Activated CD8-positive, alpha-beta memory T cell treated with anti-CD3 and anti-CD28 coated beads, Interleukin-2, amount 10 ng/mL, durations not matched to agents 7 days and 5 days (primary cell): ENCODE measurements at regions of chr1 and their contacts with region 1.

Region 1: GRCh38 chr1:155084722-155085503 is 6.3 kb downstream of the EFNA3 start:
- DNase-seq: peak; percentile 95
- ATAC-seq: peak; percentile 85
- H3K4me3 Mint-ChIP-seq: peak overlapping the region; percentile 92
- H3K27ac Mint-ChIP-seq: peak overlapping the region; percentile 94
- H3K4me1 Mint-ChIP-seq: peaks cover 32% of the 10 kb centered on the region
- H3K27me3 Mint-ChIP-seq: peaks cover 33% of the 10 kb centered on the region

Region 2: DNA sequence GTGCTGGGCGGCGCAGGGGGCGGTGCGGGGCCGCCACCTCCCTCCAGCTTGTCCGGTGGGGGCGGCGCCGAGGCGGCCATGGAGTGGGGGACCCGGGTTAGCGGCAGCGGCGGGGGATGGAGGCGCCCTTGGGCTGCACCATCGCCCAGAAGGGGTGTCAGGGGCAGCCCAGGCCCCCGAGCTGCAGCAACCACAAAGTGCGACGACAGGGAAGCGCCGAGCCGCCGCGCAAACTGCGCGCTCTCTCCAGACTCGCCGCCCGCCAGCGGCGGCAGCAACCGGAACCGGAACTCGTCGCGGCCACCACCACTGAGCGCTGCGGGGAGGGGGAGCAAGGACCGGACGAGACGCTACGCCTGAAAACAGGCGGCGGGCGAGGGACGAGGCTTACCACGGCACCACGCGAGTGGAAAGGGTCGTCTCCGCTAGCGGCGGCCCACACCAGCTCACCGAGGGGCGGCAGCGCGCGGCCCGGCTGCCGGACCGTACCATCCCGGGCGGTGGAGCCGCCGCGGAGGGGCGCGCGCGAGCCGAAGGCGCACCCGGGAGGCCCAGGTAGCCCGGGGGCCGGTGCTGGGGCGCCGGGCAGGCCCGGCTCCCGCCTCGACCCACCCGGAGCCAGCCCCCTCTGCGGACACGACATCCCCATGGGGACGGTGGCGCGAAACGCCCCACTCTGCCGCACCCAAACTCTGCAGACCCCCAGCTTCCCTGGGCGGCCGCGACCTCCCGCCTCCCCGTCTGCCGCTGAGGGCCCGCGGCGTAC is 123.2 kb before region 1 on chr1 and contains the start of gene PYGO2:
- CTCF ChIA-PET with region 1: interaction called, 10 read pairs
- DNase-seq: peak; percentile 87
- ATAC-seq: peak; percentile 86
- H3K4me3 Mint-ChIP-seq: peak within 1 kb of the TSS; percentile 96
- H3K27ac Mint-ChIP-seq: peak within 1 kb of the TSS; percentile 91
- H3K4me1 Mint-ChIP-seq: peaks cover 44% of the 10 kb centered on the region
- H3K27me3 Mint-ChIP-seq: no peaks in the 10 kb centered on the region
- total RNA-seq, gene PYGO2: 44.0 to 47.9 TPM

Region 3: GRCh38 chr1:155001675-155002463 is 83.0 kb before region 1 on chr1:
- CTCF ChIA-PET with region 1: interaction called, 12 read pairs
- DNase-seq: peak; percentile 100
- ATAC-seq: peak; percentile 77
- H3K4me3 Mint-ChIP-seq: peak overlapping the region; percentile 98
- H3K27ac Mint-ChIP-seq: peak overlapping the region; percentile 97
- H3K4me1 Mint-ChIP-seq: peaks cover 57% of the 10 kb centered on the region
- H3K27me3 Mint-ChIP-seq: no peaks in the 10 kb centered on the region

Region 4: GRCh38 chr1:155044812-155045690 is 39.9 kb before region 1 on chr1:
- CTCF ChIA-PET with region 1: interaction called, 319 read pairs
- DNase-seq: peak; percentile 81
- ATAC-seq: peak; percentile 93
- H3K4me3 Mint-ChIP-seq: no peak overlapping the region
- H3K27ac Mint-ChIP-seq: no peak overlapping the region
- H3K4me1 Mint-ChIP-seq: peaks cover 15% of the 10 kb centered on the region
- H3K27me3 Mint-ChIP-seq: peaks cover 5% of the 10 kb centered on the region

Region 5: GRCh38 chr1:155063550-155064110 is 21.3 kb before region 1 on chr1 and contains the start of gene EFNA4:
- CTCF ChIA-PET with region 1: interaction called, 319 read pairs
- DNase-seq: peak; percentile 90
- ATAC-seq: peak; percentile 88
- H3K4me3 Mint-ChIP-seq: peak within 1 kb of the TSS; percentile 83
- H3K27ac Mint-ChIP-seq: peak within 1 kb of the TSS; percentile 8
- H3K4me1 Mint-ChIP-seq: peaks cover 26% of the 10 kb centered on the region
- H3K27me3 Mint-ChIP-seq: peaks cover 4% of the 10 kb centered on the region
- total RNA-seq, gene EFNA4: 3.8 to 5.3 TPM

Region 6: GRCh38 chr1:155135415-155136028 is 50.6 kb after region 1 on chr1 and contains the start of gene SLC50A1:
- CTCF ChIA-PET with region 1: interaction called, 15 read pairs
- DNase-seq: peak; percentile 95
- ATAC-seq: peak; percentile 84
- H3K4me3 Mint-ChIP-seq: peak within 1 kb of the TSS; percentile 97
- H3K27ac Mint-ChIP-seq: peak within 1 kb of the TSS; percentile 98
- H3K4me1 Mint-ChIP-seq: peaks cover 37% of the 10 kb centered on the region
- H3K27me3 Mint-ChIP-seq: peaks cover 2% of the 10 kb centered on the region
- total RNA-seq, gene SLC50A1: 39.8 to 41.2 TPM

Region 7: GRCh38 chr1:155193275-155193990 is 108.5 kb after region 1 on chr1:
- CTCF ChIA-PET with region 1: interaction called, 11 read pairs
- DNase-seq: peak; percentile 86
- ATAC-seq: peak; percentile 66
- H3K4me3 Mint-ChIP-seq: peak overlapping the region; percentile 73
- H3K27ac Mint-ChIP-seq: peak overlapping the region; percentile 92
- H3K4me1 Mint-ChIP-seq: peaks cover 29% of the 10 kb centered on the region
- H3K27me3 Mint-ChIP-seq: no peaks in the 10 kb centered on the region

Region 8: DNA sequence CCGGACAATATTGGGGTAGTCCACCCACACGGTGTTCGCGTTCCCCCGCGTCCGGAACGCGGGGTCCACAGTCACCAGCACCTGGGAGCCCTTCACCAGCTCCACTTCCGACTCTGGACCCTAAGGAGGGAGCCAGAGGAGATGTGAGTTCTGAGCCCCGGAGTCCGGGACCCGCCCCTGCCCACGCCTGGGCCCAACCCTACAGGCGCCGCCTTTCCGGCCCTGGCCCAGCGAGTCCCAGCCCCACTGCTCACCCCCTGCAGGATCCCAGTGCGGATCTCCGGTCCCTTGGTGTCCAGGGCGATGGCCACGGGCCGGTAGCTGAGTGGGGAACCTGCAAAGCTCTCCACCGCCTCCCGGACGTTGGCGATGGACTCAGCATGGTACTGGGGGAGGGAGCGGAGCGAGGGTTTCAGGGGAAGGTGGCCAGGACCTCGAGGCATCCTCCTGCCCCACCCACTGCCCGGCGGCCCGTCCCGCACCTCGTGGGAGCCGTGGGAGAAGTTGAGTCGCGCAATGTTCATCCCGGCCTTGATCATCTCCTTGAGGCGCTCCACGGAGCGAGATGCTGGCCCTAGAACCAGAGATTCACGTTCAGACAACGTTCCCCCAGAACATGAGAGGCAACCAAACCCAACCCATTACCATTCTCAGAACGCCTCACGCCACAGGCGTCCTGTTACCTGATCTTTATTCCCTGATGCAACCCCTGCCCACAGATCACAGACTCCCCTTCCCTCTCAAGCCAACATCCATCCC is 210.4 kb after region 1 on chr1:
- CTCF ChIA-PET with region 1: no interaction called
- DNase-seq: no peak
- ATAC-seq: no peak
- H3K4me3 Mint-ChIP-seq: no peak overlapping the region
- H3K27ac Mint-ChIP-seq: no peak overlapping the region
- H3K4me1 Mint-ChIP-seq: peaks cover 7% of the 10 kb centered on the region
- H3K27me3 Mint-ChIP-seq: peaks cover 46% of the 10 kb centered on the region